A673 (cell line): ENCODE measurements at regions of chr12 and their contacts with region 1.

Region 1: DNA sequence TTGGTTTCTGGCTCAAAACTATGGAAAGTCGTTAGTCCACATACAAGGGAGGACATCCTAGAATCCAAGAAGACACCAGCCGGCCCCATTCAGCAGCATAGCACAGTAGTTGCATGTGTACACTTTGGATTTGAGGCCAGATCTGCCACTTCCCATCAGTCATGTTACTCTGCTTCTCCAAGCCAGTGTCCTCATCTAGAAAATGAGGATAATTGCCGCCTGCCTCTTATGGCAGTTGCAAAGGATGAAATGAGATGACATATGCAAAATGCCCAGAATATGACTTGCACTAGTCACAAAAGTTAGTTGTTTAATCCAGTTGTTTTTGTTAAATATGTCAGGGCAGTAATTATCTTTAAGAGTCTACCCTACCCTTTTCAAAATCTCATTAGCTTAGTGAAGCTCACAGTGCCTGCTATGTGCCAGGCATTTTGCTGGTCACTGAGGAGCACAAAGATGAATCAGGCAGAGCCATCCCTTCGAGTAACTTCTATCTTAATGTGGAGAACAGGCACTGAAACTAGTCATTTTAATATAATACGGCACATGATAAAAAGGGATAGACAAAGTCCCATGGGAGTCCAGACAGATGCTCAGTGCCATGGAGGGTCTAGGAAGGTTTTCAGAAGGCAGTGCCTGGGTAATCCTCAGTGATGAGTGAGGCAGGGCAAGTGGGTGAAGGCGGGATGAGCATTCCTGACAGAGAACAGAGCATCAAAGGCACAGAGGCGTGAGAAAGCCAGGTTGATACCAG is 6.6 kb upstream of the KRT76 start:
- DNase-seq: no peak
- H3K4me3 ChIP-seq: no peak overlapping the region
- H3K27ac ChIP-seq: no peak overlapping the region
- H3K4me1 ChIP-seq: no peaks in the 10 kb centered on the region
- H3K27me3 ChIP-seq: no peaks in the 10 kb centered on the region
- CTCF ChIP-seq: no peak

Region 2: DNA sequence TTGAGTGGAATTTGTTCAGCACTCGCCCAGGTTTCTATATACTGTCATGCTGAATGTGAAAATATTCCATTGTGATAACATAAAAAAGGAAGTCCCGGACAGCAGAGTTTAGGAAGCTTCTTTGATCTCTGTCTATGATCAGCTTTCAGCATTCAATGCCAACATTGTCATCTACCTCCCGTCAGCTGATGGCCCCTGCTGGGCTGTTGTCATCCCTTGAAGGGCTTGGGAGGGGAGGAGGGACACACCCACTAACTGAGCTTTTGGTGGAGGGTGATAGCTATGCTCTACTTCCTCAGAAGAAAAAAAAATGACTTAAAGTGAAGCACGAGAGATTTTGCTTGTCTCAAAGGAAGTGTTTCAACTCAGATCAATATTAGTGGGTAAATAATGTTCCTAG is 75.7 kb before region 1 on chr12:
- CTCF ChIA-PET with region 1: no interaction called
- POLR2A ChIA-PET with region 1: interaction called, 17 read pairs
- intact Hi-C with region 1: no loop called
- DNase-seq: no peak
- H3K4me3 ChIP-seq: no peak overlapping the region
- H3K27ac ChIP-seq: no peak overlapping the region
- H3K4me1 ChIP-seq: peaks cover 5% of the 10 kb centered on the region
- H3K27me3 ChIP-seq: peaks cover 2% of the 10 kb centered on the region
- CTCF ChIP-seq: no peak

Region 3: GRCh38 chr12:52945591-52946346 is 162.0 kb after region 1 on chr12:
- CTCF ChIA-PET with region 1: no interaction called
- POLR2A ChIA-PET with region 1: no interaction called
- intact Hi-C with region 1: no loop called
- DNase-seq: peak; percentile 93
- H3K4me3 ChIP-seq: no peak overlapping the region
- H3K27ac ChIP-seq: peak overlapping the region; percentile 91
- H3K4me1 ChIP-seq: peaks cover 50% of the 10 kb centered on the region
- H3K27me3 ChIP-seq: no peaks in the 10 kb centered on the region
- CTCF ChIP-seq: no peak